ENCODE measurements at regions of chr12 and their contacts with region 1.

Region 1: DNA sequence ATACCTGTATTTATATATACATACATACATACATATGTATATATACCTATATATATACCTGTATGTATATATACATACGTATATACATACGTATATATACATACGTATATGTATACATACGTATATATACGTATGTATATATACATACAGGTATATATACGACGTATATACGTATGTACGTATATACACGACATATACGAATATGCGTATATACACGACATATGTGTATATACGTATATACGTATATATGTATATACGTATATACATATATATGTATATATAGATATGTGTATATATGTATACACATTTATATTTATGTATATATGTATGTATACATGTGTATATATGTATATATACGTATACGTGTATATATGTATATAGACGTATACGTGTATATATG is 92.7 kb upstream of the ABCD2 start:
- DNase-seq: no peak
- ATAC-seq: no peak
- H3K4me3 ChIP-seq: no peak overlapping the region
- H3K27ac ChIP-seq: no peak overlapping the region
- H3K4me1 ChIP-seq: no peaks in the 10 kb centered on the region
- H3K27me3 ChIP-seq: no peaks in the 10 kb centered on the region
- CTCF ChIP-seq: no peak

Region 2: DNA sequence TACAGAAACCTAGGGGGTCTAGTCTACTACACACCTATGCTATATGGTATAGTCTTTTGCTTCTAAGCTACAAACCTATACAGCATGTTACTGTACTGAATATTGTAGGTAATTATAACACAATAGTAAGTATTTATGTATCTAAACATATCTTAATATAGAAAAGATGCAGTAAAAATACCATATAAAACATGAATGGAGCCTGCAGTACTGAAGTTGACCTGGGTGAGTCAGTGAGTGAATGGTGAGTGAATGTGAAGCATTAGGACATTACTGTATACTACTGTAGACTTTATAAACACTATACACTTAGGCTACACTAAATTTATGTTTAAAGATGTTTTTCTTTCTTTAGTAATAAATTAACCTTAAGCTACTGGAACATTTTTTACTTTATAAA is 79.7 kb before region 1 on chr12:
- CTCF ChIA-PET with region 1: no interaction called
- POLR2A ChIA-PET with region 1: no interaction called
- in situ Hi-C with region 1: no loop called
- intact Hi-C with region 1: no loop called
- DNase-seq: no peak
- ATAC-seq: no peak
- H3K4me3 ChIP-seq: no peak overlapping the region
- H3K27ac ChIP-seq: no peak overlapping the region
- H3K4me1 ChIP-seq: no peaks in the 10 kb centered on the region
- H3K27me3 ChIP-seq: peaks cover 5% of the 10 kb centered on the region
- CTCF ChIP-seq: no peak

Region 3: GRCh38 chr12:39723831-39724230 is 11.5 kb after region 1 on chr12:
- CTCF ChIA-PET with region 1: no interaction called
- POLR2A ChIA-PET with region 1: no interaction called
- in situ Hi-C with region 1: no loop called
- intact Hi-C with region 1: no loop called
- DNase-seq: no peak
- ATAC-seq: no peak
- H3K4me3 ChIP-seq: no peak overlapping the region
- H3K27ac ChIP-seq: no peak overlapping the region
- H3K4me1 ChIP-seq: no peaks in the 10 kb centered on the region
- H3K27me3 ChIP-seq: no peaks in the 10 kb centered on the region
- CTCF ChIP-seq: no peak

Region 4: DNA sequence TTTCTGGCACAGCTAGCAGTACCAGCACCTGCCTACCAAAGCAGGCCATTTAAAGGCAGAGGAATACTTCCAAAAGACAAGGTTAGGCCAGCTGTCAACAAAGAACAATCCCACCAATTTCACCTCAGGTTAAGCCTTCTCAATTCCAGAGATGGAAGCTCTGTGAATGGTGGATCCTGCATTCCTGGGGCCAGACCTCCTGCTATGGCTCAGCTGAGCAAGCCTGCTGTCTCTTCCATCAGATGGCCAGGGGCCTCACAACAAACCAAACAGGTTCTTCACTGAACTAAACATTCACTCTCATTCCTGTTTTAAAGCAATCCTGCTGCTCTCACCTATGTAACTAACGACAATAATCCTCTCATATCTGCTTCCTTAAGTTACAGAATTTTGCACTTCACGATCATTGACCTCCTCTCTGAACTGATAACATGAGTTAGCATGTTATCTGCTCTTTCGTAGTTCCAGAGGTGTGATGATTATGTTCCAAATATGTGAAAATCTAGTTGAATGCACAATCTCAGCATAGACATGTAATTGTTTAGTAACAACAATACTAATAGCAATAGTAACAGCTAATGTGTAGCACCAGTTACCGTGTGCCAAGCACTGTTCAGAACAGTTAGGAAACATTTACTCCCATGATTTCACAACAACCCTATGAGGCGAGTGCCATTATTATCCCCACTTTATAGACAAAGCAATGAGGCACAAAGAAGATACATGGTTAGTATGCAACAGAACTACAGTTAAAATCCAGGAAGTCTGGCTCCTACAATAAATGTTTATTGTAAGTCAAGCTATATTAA is 320.3 kb after region 1 on chr12:
- CTCF ChIA-PET with region 1: no interaction called
- POLR2A ChIA-PET with region 1: interaction called, 15 read pairs
- in situ Hi-C with region 1: no loop called
- intact Hi-C with region 1: no loop called
- DNase-seq: no peak
- ATAC-seq: no peak
- H3K4me3 ChIP-seq: no peak overlapping the region
- H3K27ac ChIP-seq: no peak overlapping the region
- H3K4me1 ChIP-seq: peaks cover 4% of the 10 kb centered on the region; the same call in 1 of the 2 replicates
- H3K27me3 ChIP-seq: no peaks in the 10 kb centered on the region
- CTCF ChIP-seq: no peak